ENCODE measurements at regions of chr14 and their contacts with region 1.

Region 1: DNA sequence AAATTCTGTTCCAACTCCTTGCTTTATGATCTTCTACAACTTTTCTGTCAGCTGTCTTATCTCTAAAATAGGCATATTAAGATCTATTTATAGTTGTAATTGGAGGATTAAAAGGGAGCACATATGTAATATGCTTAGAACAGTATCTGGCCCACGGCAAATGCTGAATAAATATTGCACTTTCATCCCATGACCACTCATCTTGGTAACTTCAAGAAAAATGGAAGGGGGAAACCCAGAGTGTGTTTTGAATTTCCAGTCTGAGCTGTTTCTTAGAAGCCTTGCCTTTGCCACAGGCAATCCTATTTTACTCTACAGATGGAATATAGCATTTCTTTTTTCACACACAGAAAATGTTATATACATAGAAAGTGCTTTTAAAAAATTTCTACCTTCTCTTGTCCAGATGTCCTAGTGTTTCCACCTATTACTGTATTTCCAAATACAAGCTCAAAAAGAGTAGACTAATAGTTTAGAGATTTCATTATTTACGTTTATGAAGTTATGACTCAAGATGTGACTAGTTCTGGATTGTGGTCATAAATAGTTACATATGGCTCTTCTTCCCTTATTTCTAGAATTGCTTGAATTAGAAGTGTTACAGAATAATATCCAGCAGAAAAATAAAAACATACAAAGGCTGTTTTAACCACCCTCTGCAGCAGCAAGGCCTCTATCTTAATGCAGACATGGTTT is 6.2 kb upstream of the STXBP6 start:
- DNase-seq: no peak

Region 2: DNA sequence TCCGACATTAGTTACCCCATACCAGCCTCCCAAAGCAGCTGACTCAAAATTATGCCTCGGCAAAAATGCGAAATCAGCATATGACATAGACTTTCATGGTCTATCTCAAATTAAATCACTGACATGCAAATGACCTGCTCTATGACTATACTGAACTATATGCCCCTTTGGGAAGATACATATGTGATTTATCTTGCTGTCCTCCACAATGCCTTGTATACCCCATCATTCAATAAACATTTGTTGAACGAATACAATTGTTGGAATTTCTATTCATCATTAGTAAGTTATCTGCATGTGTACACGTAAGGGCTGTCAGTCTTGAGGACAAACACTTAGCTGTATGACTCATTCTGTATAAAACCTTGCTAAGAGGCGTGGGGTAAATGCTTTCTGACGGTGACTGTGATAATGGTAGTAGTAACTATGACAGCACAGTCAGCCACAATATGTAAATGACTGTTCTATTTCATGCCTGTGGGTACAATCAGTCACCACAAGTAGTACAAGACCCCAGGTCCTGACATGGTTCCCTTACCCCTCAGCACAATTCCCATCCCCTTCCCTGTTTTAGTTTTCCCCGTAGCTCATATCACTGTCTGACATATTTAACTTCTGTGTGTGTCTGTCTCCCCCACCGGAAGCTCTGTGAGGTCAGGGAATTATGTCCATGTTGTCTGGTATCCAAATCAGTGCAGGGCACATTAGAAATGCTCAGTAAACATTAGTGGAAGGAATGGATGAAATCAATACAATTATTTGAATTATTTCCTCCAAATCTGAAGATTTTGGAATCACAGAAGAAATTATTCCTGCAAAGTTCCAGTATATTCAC is 49.0 kb before region 1 on chr14:
- intact Hi-C with region 1: no loop called
- DNase-seq: peak in 7 of 42 donors; percentile 4 to 58 (median 26)

Region 3: DNA sequence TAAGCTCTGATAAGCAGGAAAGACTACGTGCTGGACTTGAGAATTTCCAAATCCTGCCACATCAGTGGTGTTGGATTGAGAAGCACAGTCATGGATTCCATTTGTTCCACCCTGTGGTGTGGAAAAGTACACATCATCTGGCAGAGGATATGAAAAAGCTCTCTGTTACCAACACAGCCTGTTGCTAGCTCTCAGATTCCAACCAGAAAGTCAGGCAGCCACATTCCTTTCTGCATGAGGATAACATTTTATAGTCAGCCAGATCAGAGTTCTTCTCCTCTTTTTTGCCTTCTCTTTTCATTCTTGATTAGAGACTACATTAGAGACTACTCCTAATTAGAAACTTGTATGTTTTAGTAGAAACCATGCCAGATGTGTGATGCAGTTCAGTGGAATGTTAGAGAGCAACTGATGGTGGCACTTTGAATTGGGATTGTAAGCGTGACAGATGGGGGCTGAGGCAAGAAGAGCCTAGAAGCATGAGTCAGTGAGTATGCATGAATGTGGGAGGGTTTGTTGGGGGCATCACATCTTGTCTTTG is 55.0 kb after region 1 on chr14:
- intact Hi-C with region 1: loop called (anchors 5 kb)
- DNase-seq: peak in 9 of 42 donors; percentile 15 to 69 (median 29)

Region 4: DNA sequence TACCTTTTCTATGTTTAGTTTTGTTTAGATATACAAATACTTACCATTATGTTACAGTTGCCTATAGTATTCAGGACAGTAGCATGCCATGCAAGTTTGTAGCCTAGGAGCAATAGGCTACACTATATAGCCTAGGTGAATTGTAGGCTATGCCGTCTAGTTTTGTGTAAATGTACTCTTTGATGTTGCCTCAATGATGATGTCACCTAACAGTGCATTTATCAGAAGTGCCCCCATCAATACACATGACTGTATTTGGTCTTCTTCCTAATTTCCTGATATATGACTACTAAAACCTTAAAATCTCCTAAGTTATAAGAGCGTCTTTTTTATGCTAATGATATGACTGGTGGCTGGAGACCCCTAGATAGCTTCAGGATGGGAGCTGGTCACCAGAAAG is 388.2 kb after region 1 on chr14:
- intact Hi-C with region 1: no loop called
- DNase-seq: no peak